Activated T-helper 2 cell treated with anti-CD3 and anti-CD28 coated beads, Interferon-gamma antibody, Interleukin-2, Interleukin-4, amounts not matched to agents 10 μg/mL and 5 μg/mL and 100 μg/mL, durations not matched to agents 14 hours and 24 hours and 36 hours (primary cell): ENCODE measurements at regions of chr9 and their contacts with region 1.

Region 1: DNA sequence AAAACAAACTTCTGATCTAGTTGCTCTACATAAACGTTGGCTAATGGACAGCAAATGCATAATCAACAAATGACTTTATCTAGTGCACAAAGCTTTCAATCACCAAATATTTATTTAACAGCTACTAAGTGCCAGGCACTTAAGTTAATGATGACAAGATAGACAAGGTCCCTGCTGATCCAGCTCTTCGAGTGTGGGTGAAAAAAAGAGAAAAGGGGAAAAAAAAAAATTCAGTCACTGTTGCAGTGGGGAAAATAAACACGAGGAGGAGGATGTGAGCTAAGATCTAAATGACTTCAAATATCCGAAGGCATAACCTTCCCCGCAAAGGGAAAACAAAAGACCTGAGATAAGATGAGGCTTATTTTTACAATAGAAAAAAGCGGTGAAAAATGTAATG is 9.6 kb downstream of the PSIP1 start:
- DNase-seq: no peak
- H3K4me3 Mint-ChIP-seq: no peak overlapping the region
- H3K27ac Mint-ChIP-seq: no peak overlapping the region
- H3K4me1 Mint-ChIP-seq: peaks cover 47% of the 10 kb centered on the region
- H3K27me3 Mint-ChIP-seq: no peaks in the 10 kb centered on the region

Region 2: DNA sequence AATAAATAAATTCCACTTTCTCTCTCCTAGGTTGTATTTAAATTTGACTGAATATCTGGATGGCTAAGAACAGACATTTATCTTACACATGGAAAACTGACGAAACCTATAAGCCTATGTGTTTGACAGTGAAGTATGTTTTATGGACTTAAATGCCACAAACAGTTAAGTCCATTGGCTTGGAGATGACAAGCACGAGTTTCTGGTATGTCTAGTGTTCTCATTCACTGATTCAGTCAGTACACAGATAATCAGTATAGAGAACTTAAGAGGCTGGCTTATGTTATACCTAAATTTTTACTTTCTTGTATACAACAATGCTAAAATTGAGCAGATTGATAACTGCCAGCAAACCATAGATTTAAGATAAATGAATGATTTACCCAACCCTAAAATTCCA is 39.6 kb before region 1 on chr9:
- intact Hi-C with region 1: loop called (anchors 5 kb)
- DNase-seq: no peak
- H3K4me3 Mint-ChIP-seq: no peak overlapping the region
- H3K27ac Mint-ChIP-seq: no peak overlapping the region
- H3K4me1 Mint-ChIP-seq: peaks cover under 1% of the 10 kb centered on the region
- H3K27me3 Mint-ChIP-seq: no peaks in the 10 kb centered on the region

Region 3: GRCh38 chr9:15543047-15543813 is 42.1 kb after region 1 on chr9:
- intact Hi-C with region 1: no loop called
- DNase-seq: no peak
- H3K4me3 Mint-ChIP-seq: no peak overlapping the region
- H3K27ac Mint-ChIP-seq: no peak overlapping the region
- H3K4me1 Mint-ChIP-seq: no peaks in the 10 kb centered on the region
- H3K27me3 Mint-ChIP-seq: peaks cover 14% of the 10 kb centered on the region

Region 4: DNA sequence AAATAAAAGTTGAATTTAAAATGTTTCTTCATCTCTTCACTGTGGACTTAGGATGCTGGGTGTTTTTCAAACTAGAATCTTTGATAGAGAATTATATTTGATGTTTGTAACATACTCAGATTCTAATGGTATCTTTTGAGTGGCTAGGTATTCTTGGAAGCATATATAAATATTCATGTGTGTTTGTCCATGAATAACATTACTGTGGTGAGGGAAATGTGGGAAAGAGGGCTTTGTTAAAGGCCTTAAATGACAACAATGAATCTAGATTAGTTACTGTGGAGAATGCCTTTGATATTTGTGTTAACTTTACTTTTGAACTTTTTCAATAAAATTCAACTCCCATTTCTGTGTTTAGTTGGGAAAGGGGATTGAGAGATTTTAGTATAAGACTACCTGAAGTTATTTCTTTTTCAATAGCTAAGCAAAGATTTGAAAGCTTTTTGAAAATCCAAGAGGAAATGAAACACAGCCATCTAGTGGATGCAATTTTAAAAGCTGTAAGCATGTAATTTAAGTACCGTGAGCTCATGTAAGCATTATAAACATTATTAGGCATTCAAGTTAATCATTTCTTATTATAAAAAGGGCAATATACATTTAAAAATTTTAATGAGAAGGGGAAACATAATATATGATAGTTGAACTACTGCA is 121.3 kb after region 1 on chr9:
- intact Hi-C with region 1: no loop called
- DNase-seq: no peak
- H3K4me3 Mint-ChIP-seq: no peak overlapping the region
- H3K27ac Mint-ChIP-seq: no peak overlapping the region
- H3K4me1 Mint-ChIP-seq: no peaks in the 10 kb centered on the region
- H3K27me3 Mint-ChIP-seq: no peaks in the 10 kb centered on the region